ENCODE measurements at regions of chr22 and their contacts with region 1.

Region 1: DNA sequence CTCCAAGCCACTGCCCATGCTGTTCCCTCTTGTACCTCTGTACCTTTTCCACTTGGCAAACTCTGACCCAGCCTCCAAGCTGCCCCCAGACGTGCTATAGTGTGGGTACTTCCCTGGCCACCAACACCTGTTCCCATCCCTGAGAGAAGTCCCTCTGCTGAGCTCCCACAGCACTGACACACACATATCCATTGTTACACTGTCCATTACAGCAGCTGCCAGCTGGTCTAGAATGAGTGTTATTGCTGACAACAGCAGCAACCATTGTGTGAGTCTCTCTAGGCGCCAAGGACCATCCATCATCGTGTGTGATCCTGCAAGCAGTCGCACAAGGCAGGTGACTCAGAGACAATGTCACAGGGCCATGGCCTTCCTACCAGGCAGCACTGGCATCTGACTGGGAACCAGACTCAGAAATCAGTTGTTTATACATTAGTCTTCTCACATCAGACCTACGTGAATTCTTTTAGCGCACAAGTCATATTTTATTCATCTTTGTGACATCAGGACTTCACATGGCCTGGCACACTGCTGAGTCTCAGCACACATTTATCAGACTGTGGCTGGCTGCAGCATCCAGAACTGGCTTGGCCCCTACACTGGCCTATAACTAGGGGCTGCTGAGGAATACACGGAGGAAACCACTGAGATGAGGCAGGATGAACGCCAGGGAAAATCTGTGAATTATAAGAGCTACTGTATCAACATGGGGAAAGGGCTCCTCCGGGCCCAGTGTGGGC is 56.4 kb downstream of the SGSM3 start:
- DNase-seq: no peak
- H3K4me3 ChIP-seq: no peak overlapping the region
- CTCF ChIP-seq: no peak
- POLR2A ChIP-seq: no peak

Region 2: DNA sequence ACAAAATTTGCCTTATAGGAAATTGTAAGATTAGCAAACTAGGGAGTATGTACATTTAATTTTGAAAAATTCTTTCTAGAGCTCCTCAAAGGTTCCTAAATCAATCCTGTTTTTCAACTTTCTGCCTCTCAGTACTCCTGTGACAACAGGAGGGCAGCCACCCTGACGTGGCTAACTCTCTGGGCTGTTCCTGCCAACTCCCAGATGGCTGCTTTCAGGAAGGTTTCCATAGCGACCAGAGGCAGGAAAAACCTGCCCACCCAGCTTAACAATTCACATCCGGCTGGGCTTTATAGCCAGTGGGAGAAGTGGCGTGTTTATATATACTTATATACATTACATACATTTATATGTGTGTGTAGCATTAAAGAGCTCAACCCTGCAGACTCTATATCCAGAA is 29.9 kb before region 1 on chr22:
- intact Hi-C with region 1: no loop called
- DNase-seq: peak in 1 of 2 donors; percentile 70
- H3K4me3 ChIP-seq: no peak overlapping the region
- CTCF ChIP-seq: no peak
- POLR2A ChIP-seq: no peak

Region 3: GRCh38 chr22:40757071-40757470 is 330.3 kb after region 1 on chr22:
- intact Hi-C with region 1: loop called (anchors 10 kb)
- DNase-seq: no peak
- H3K4me3 ChIP-seq: no peak overlapping the region
- CTCF ChIP-seq: no peak
- POLR2A ChIP-seq: no peak